Heart right ventricle (tissue), 16 donors: ENCODE measurements at regions of chr18 and their contacts with region 1.

Region 1: DNA sequence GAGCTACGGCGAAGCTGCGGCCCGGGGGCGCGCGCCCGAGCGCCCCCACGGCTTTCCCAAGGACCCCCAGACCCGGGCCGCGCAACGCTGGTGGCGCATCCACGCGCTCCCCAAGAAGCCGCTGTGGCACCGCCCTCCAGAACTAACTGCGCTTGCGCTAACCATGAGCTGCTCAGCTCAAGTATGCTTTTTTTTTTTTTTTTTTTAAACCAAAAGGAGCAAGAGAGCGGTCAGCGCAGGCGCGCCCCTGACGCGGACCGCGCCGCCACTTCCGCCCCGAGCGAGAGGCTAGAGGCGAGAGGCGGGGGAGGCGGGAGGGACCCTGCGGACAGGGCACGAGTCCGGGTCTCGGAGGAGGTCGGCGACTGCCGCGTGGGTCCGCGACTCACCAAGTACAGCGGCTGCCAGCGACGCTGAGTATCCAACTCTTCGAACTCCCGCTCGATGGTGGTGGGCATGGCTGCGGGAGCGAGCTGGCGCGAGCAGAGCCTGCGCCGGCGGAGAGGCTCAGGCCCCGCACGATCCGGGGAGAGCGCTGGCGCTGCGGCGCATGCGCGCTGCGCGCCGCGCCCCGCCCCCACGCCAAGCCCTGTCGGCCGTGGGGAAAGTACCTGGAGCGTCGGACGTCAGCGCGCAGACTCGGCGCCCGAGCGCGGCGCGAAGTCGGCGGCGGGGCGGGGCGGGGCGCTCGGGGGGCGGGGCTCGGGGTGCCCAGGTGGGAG is at the start of gene PTPN2:
- DNase-seq: peak; percentile 93 to 95
- ATAC-seq: peak; percentile 95 to 98 (median 96)
- H3K4me3 ChIP-seq: peak within 1 kb of the TSS; percentile 68 to 93 (median 79)
- H3K27ac ChIP-seq: peak within 1 kb of the TSS; percentile 98 to 100 (median 100)
- H3K4me1 ChIP-seq: peaks cover 0 to 55% (median 22%) of the 10 kb centered on the region in 9 donors
- H3K27me3 ChIP-seq: no peaks in the 10 kb centered on the region
- CTCF ChIP-seq: no peak
- total RNA-seq, gene PTPN2: 10.5 to 19.5 (median 13.5) TPM

Region 2: DNA sequence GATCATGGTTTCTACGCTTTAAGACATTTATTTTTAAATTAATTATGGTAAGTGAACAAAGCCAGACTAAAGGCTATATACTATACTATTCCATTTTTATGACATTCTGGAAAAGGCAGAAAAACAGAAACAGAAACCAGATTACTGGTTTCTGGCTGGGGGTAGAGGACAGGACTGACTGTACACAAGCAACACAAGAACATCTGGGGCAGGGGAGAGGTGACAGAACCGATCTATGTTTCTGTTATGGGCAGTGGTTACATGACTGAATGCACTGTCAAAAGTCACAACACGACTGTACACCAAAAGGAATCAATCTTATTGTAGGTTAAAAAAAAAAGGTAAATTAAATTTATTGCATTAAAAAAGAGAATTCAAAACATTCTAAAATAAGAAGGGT is 64.5 kb before region 1 on chr18:
- intact Hi-C with region 1: loop called in 1 of 10 experiments (anchors 10 kb)
- DNase-seq: no peak
- ATAC-seq: no peak
- H3K4me3 ChIP-seq: no peak overlapping the region
- H3K27ac ChIP-seq: peak overlapping the region in 1 of 10 donors; percentile 49
- H3K4me1 ChIP-seq: peaks cover 0 to 9% (median 0%) of the 10 kb centered on the region in 9 donors
- H3K27me3 ChIP-seq: no peaks in the 10 kb centered on the region
- CTCF ChIP-seq: no peak

Region 3: GRCh38 chr18:12839526-12840196 is 44.2 kb before region 1 on chr18:
- intact Hi-C with region 1: loop called in 1 of 10 experiments (anchors 5 kb)
- DNase-seq: no peak
- ATAC-seq: peak in 7 of 8 donors; percentile 39 to 71 (median 54)
- H3K4me3 ChIP-seq: peak overlapping the region in 1 of 10 donors; percentile 23
- H3K27ac ChIP-seq: peak overlapping the region in 6 of 10 donors; percentile 15 to 88 (median 34)
- H3K4me1 ChIP-seq: peaks cover 0 to 72% (median 7%) of the 10 kb centered on the region in 9 donors
- H3K27me3 ChIP-seq: no peaks in the 10 kb centered on the region
- CTCF ChIP-seq: no peak

Region 4: DNA sequence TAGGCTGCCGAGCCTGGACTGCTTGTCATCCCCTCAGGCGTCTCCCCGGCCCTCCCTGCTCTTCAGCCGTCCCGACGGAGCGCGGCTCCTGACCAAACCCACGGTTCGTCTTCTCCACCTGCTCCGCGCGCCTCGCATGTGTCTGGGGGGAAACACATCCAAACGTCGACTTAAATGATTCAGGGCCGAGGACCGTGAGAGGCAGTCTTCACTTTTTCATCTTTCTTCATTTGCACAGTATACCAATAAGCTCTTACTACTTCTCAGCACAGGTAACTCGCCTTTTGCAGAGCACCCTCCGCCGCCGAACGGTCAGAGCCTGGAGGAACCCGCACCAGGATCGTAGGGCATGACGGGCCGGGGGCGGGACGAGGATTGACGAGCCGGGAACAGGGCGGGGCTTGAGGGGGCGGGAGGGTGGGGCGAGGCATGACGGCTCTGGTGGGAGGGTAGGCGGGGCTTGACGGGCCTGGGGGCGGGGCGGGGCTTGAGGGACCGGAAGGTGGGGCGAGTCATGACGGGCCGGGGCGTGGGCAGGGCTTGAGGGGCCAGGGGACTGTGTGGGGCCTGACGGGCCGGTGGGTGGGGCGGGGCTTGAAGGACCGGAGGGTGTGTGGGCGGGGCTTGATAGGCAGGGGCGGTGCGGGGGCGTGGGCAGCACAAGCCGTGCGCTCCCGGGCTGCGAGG is 63.7 kb after region 1 on chr18 and contains the start of gene SEH1L:
- intact Hi-C with region 1: loop called in 3 of 10 experiments (anchors 1 to 5 kb)
- DNase-seq: peak; percentile 99 to 100
- ATAC-seq: peak; percentile 95 to 99 (median 97)
- H3K4me3 ChIP-seq: peak within 1 kb of the TSS; percentile 56 to 81 (median 71)
- H3K27ac ChIP-seq: peak within 1 kb of the TSS; percentile 92 to 100 (median 97)
- H3K4me1 ChIP-seq: peaks cover 0 to 53% (median 23%) of the 10 kb centered on the region in 9 donors
- H3K27me3 ChIP-seq: no peaks in the 10 kb centered on the region
- CTCF ChIP-seq: no peak
- total RNA-seq, gene SEH1L: 15.0 to 24.6 (median 17.7) TPM

Region 5: DNA sequence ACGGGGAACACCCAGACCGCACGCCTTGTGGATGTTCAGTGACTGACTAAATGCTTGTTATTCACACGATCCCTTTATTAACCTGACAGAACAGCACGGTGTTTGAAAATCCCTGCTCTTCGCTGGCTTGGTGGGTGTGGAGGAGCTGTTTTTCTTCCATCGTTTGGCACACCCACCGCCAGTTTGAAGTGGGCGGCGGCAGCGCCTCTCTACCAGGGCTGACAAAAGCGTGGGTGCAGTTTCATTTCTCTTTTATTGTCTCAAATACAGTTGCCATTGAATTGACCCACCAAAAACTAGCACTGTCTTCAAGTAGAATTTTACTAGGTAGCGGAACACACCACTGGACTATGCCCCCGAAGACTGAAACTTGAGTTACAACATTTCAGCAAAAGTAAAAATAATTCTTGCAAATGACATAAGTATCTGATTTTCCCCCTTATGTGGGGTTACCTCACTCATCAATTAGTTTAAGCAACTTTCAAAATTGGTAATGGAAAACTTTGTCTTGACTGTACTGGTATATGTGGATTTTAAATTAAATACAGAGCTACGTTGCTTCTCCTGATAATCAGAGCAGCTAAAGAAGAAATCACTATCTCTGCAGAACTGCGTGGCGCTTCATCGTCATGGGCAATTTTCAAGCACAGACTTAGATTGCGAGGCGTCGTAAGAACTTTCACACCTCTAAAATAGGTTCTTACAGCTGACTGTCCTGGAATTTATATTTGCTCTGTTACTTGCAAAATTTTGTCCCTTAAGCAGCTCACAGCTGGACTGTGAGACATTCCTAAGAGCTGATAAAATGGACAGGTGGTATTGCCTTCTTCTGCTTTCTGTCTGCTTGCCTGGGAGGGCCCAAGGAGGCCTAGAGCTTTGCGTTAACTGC is 395.6 kb after region 1 on chr18:
- intact Hi-C with region 1: no loop called
- DNase-seq: no peak
- ATAC-seq: no peak
- H3K4me3 ChIP-seq: no peak overlapping the region
- H3K27ac ChIP-seq: peak overlapping the region in 7 of 10 donors; percentile 14 to 61 (median 48)
- H3K4me1 ChIP-seq: peaks cover 1 to 59% (median 46%) of the 10 kb centered on the region in 9 donors
- H3K27me3 ChIP-seq: no peaks in the 10 kb centered on the region
- CTCF ChIP-seq: no peak

Region 6: DNA sequence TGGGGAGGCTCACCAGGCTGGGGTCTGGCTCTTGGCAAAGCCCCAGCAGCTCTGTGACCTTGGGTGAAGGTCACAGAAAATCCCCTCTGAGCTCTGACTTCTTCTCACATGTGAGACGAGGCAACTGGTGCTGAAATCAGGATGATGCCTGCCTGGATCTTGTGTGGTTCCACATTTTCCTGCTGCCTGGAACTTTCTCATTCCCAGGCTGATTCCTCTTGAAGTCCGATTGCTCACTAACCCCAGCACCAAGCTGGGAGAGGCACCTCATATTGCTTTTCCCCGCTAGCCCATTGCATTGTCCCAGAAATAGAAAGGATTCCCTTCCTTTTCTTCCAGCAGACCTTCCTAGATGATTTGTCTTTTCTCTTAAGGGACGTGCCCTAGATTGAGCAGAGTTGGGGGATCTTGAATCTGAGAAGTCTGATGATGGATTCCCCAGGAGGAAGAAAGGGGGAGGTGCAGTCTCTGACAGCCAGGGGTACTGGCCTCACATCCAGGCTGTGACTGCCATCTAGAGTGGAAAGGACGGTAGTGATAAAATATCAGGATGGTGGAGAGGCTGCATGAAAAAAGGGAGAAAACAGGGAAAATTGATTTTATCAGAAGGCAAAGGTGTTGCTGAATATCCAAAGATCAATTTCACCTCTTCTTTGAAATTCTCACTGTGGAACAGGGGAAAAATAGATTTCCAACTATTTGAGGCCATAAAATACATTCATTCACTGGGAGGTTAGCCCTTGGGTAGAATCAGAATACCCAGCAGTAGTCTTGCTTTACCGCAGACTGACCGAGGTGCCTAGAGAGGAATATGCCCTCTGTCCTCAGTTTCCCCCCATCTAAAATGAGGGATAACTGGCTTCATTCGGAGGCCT is 746.2 kb after region 1 on chr18:
- intact Hi-C with region 1: no loop called
- DNase-seq: peak in 1 of 2 donors; percentile 80
- ATAC-seq: peak; percentile 78 to 93 (median 90)
- H3K4me3 ChIP-seq: no peak overlapping the region
- H3K27ac ChIP-seq: peak overlapping the region in 7 of 10 donors; percentile 34 to 61 (median 43)
- H3K4me1 ChIP-seq: peaks cover 6 to 32% (median 22%) of the 10 kb centered on the region in 9 donors
- H3K27me3 ChIP-seq: no peaks in the 10 kb centered on the region
- CTCF ChIP-seq: peak; percentile 69 to 91 (median 83)